ENCODE measurements at regions of chrX and their contacts with region 1.

Region 1: DNA sequence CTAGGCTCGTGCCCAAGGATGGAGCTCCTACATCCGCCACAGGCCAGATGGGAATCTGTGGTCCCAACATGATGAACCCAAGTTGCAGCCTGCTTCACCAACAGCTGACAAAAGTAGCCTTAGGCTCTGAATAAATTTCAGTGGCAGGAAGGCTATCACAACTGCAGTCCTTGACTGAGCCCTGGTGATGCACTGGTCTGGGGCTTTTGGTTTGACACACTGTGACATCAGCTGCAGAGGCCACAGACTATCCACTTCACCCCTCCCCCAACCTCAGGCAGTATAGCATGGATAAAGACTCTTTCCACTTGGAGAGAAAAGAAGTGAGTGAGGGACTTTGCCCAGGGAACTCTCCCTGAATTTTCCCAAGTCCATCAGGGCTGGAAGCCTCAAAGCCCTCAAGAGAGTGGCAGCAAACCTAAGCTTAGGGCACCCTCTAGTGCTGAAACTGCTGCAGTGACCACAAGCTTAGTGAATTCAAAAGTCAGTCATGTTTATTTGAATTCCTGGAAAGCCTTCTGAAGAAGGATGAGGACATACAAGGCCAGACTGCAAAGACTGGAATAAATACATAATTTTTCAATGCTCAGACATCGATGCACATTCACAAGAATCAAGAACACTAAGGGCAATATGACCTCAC is 135.0 kb upstream of the TENT5D start:
- DNase-seq: peak; percentile 71
- ATAC-seq: peak; percentile 80
- H3K4me3 ChIP-seq: no peak overlapping the region
- H3K27ac ChIP-seq: no peak overlapping the region
- H3K4me1 ChIP-seq: peaks cover 15% of the 10 kb centered on the region
- H3K27me3 ChIP-seq: no peaks in the 10 kb centered on the region
- CTCF ChIP-seq: peak; percentile 88

Region 2: GRCh38 chrX:79477691-79478090 is 807.6 kb before region 1 on chrX:
- CTCF ChIA-PET with region 1: no interaction called
- POLR2A ChIA-PET with region 1: no interaction called
- intact Hi-C with region 1: loop called (anchors 10 kb)
- DNase-seq: peak; percentile 12
- ATAC-seq: no peak; the same call in 1 of the 2 replicates
- H3K4me3 ChIP-seq: no peak overlapping the region
- H3K27ac ChIP-seq: no peak overlapping the region
- H3K4me1 ChIP-seq: no peaks in the 10 kb centered on the region
- H3K27me3 ChIP-seq: no peaks in the 10 kb centered on the region
- CTCF ChIP-seq: peak; percentile 31; the same call in 1 of the 2 replicates

Region 3: GRCh38 chrX:80181079-80181478 is 104.2 kb before region 1 on chrX:
- CTCF ChIA-PET with region 1: no interaction called
- POLR2A ChIA-PET with region 1: no interaction called
- intact Hi-C with region 1: no loop called
- DNase-seq: peak; percentile 27
- ATAC-seq: no peak
- H3K4me3 ChIP-seq: no peak overlapping the region
- H3K27ac ChIP-seq: no peak overlapping the region
- H3K4me1 ChIP-seq: no peaks in the 10 kb centered on the region
- H3K27me3 ChIP-seq: no peaks in the 10 kb centered on the region
- CTCF ChIP-seq: peak; percentile 55

Region 4: DNA sequence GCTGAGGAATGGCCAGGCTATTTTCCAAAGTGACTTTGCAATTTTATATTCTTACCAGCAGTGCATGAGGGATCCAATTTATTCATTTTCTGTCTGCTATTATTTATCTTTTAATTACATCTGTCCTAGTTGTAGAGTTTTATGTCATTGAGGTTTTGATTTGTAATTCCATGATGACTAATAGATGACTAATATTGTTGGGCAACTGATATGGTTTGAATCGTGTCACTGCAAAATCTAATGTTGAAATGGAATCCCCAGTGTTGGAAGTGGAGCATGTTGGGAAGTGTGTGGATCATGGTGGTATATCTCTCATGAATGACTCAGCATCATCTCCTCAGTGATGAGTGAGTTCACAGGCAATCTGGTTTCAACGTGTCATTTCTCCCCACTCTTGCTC is 69.2 kb before region 1 on chrX:
- CTCF ChIA-PET with region 1: no interaction called
- POLR2A ChIA-PET with region 1: no interaction called
- intact Hi-C with region 1: no loop called
- DNase-seq: peak; percentile 85
- ATAC-seq: peak; percentile 87
- H3K4me3 ChIP-seq: no peak overlapping the region
- H3K27ac ChIP-seq: peak overlapping the region; percentile 95
- H3K4me1 ChIP-seq: peaks cover 21% of the 10 kb centered on the region
- H3K27me3 ChIP-seq: no peaks in the 10 kb centered on the region
- CTCF ChIP-seq: no peak

Region 5: DNA sequence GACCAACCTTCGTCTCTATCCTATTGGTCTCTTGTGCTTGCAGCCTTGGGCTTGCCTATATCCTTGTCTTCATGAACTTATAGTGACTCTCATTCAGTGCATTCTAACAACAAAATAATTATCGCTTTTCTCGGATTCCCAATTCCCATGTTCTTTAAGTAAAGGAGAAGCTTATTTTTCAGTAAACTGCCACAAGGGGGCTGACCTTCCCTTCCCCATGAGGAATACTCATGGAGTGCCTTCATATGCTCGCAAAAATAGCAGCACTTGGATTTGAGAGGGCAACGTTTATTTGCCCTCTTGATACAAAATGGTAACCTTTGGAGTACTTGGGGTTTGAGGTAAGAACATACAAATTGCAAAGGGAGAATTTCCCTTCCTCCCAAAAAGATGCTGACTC is 48.2 kb before region 1 on chrX:
- CTCF ChIA-PET with region 1: no interaction called
- POLR2A ChIA-PET with region 1: no interaction called
- intact Hi-C with region 1: loop called (anchors 1 kb)
- DNase-seq: peak; percentile 33
- ATAC-seq: peak; percentile 42; the same call in 1 of the 2 replicates
- H3K4me3 ChIP-seq: no peak overlapping the region
- H3K27ac ChIP-seq: no peak overlapping the region
- H3K4me1 ChIP-seq: no peaks in the 10 kb centered on the region
- H3K27me3 ChIP-seq: no peaks in the 10 kb centered on the region
- CTCF ChIP-seq: peak; percentile 59

Region 6: GRCh38 chrX:80266979-80267378 is 18.3 kb before region 1 on chrX:
- CTCF ChIA-PET with region 1: no interaction called
- POLR2A ChIA-PET with region 1: no interaction called
- intact Hi-C with region 1: loop called (anchors 2 kb)
- DNase-seq: peak; percentile 87
- ATAC-seq: peak; percentile 97
- H3K4me3 ChIP-seq: no peak overlapping the region
- H3K27ac ChIP-seq: peak overlapping the region; percentile 84
- H3K4me1 ChIP-seq: peaks cover 20% of the 10 kb centered on the region
- H3K27me3 ChIP-seq: no peaks in the 10 kb centered on the region
- CTCF ChIP-seq: no peak

Region 7: GRCh38 chrX:80316526-80316925 is 31.3 kb after region 1 on chrX:
- CTCF ChIA-PET with region 1: no interaction called
- POLR2A ChIA-PET with region 1: no interaction called
- intact Hi-C with region 1: no loop called
- DNase-seq: no peak
- ATAC-seq: no peak
- H3K4me3 ChIP-seq: no peak overlapping the region
- H3K27ac ChIP-seq: no peak overlapping the region
- H3K4me1 ChIP-seq: no peaks in the 10 kb centered on the region
- H3K27me3 ChIP-seq: no peaks in the 10 kb centered on the region
- CTCF ChIP-seq: no peak

Region 8: DNA sequence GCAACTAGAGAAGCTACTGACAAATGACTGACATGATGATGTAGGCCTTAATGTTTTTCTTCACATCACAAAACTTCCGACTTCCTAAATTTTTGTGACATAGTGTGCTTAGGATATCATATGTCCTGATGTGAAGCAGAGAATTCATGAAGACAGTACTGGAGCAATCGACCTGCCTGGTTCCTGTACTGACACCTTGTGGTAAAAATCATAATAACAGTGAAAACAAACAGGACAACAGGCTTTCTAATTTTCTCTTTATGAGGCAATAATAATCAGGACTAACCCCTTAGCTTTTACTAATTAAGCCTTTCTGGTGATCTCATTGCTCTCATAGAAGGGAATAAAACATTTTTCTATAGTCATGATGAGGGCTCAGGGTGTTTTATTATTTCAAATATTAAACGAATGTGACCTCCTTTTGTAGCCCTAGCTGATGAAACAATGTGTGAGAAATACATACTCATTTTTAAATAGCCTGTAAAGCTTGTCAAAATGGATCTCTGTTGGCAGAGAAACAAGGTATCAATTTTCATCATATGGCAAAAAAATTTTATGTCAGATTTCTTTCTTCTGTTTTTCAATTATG is 293.4 kb after region 1 on chrX:
- CTCF ChIA-PET with region 1: no interaction called
- POLR2A ChIA-PET with region 1: no interaction called
- intact Hi-C with region 1: loop called (anchors 2 kb)
- DNase-seq: peak; percentile 55
- ATAC-seq: peak; percentile 50; the same call in 1 of the 2 replicates
- H3K4me3 ChIP-seq: no peak overlapping the region
- H3K27ac ChIP-seq: no peak overlapping the region
- H3K4me1 ChIP-seq: no peaks in the 10 kb centered on the region
- H3K27me3 ChIP-seq: no peaks in the 10 kb centered on the region
- CTCF ChIP-seq: peak; percentile 67